ENCODE measurements at regions of chr17 and their contacts with region 1.

Region 1: GRCh38 chr17:7818746-7819645 is 15.0 kb upstream of the KDM6B start:
- DNase-seq: peak in 1 of 3 donors; percentile 42
- ATAC-seq: no peak
- H3K4me3 ChIP-seq: no peak overlapping the region
- H3K27ac ChIP-seq: no peak overlapping the region
- H3K4me1 ChIP-seq: no peaks in the 10 kb centered on the region
- H3K27me3 ChIP-seq: no peaks in the 10 kb centered on the region
- CTCF ChIP-seq: no peak
- POLR2A ChIP-seq: no peak

Region 2: DNA sequence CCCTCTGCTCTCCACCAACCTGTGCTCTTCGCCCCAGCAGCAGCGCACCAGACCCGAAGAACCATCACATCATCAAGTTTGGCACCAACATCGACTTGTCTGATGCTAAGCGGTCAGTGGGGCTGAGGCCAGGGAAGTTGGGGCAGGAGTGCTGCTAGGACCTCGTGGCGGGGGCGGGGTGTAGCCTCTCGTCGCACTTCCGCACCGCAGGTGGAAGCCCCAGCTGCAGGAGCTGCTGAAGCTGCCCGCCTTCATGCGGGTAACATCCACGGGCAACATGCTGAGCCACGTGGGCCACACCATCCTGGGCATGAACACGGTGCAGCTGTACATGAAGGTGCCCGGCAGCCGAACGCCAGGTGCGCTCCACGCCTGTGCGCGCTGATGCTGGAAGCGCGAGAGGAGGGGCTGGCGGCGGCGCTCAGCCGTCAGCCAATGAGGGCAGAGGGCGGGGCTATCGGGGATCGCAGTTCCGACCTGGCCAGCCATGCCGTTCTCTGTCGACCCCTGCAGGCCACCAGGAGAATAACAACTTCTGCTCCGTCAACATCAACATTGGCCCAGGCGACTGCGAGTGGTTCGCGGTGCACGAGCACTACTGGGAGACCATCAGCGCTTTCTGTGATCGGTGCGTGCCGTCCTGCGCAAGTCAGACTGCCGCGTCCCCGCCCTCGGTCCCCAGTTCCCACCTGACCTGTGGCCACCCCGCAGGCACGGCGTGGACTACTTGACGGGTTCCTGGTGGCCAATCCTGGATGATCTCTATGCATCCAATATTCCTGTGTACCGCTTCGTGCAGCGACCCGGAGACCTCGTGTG is 32.7 kb after region 1 on chr17:
- intact Hi-C with region 1: loop called in 1 of 2 experiments (anchors 5 kb)
- DNase-seq: peak; percentile 91 to 92 (median 92)
- ATAC-seq: peak; percentile 79 to 91 (median 83)
- H3K4me3 ChIP-seq: peak overlapping the region in 1 of 3 donors; percentile 5
- H3K27ac ChIP-seq: no peak overlapping the region
- H3K4me1 ChIP-seq: peaks cover 0 to 15% (median 4%) of the 10 kb centered on the region in 4 donors
- H3K27me3 ChIP-seq: no peaks in the 10 kb centered on the region
- CTCF ChIP-seq: peak; percentile 96 to 99 (median 97)
- POLR2A ChIP-seq: no peak

Region 3: GRCh38 chr17:8057691-8058114 is 238.7 kb after region 1 on chr17:
- intact Hi-C with region 1: no loop called
- DNase-seq: no peak
- ATAC-seq: peak; percentile 82 to 85 (median 83)
- H3K4me3 ChIP-seq: no peak overlapping the region
- H3K27ac ChIP-seq: no peak overlapping the region
- H3K4me1 ChIP-seq: peaks cover 0 to 38% (median 6%) of the 10 kb centered on the region in 4 donors
- H3K27me3 ChIP-seq: peaks cover 0 to 17% of the 10 kb centered on the region in 2 donors
- CTCF ChIP-seq: peak; percentile 73 to 85 (median 75)
- POLR2A ChIP-seq: no peak

Measured in right lobe of liver (tissue), 6 donors.